Dorsolateral prefrontal cortex (tissue), 120 donors: ENCODE measurements at regions of chr1 and their contacts with region 1.

Region 1: DNA sequence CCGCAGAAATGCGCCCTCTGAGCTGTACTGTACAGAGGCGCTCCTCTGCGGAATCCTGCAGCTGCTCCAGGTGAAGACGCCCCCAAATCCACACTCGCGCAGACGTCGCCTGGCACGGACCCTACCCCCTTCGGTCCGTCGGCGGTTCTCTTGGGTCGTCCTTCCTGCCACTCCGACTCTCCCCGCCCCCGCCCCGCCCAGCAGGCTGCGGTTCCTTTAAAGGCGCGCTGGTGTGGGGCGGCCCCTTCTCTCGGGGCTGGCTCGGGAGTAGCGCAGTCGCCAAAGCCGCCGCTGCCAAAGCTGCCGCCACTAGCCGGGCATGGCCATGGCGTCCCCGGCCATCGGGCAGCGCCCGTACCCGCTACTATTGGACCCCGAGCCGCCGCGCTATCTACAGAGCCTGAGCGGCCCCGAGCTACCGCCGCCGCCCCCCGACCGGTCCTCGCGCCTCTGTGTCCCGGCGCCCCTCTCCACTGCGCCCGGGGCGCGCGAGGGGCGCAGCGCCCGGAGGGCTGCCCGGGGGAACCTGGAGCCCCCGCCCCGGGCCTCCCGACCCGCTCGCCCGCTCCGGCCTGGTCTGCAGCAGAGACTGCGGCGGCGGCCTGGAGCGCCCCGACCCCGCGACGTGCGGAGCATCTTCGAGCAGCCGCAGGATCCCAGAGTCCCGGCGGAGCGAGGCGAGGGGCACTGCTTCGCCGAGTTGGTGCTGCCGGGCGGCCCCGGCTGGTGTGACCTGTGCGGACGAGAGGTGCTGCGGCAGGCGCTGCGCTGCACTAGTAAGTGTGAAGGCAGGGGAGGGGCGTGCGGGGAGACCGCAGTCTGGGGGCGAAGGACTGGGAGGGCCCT is at the start of gene RASSF5:
- DNase-seq: peak; percentile 37 to 88 (median 76)
- H3K4me3 ChIP-seq: peak within 1 kb of the TSS; percentile 35 to 83 (median 68)
- H3K27ac ChIP-seq: peak within 1 kb of the TSS in 34 of 59 donors; percentile 6 to 79 (median 56)
- H3K27me3 ChIP-seq: peaks cover 0 to 33% (median 0%) of the 10 kb centered on the region in 45 donors
- CTCF ChIP-seq: no peak
- total RNA-seq, gene RASSF5: 7.5 to 31.8 (median 17.5) TPM

Region 2: DNA sequence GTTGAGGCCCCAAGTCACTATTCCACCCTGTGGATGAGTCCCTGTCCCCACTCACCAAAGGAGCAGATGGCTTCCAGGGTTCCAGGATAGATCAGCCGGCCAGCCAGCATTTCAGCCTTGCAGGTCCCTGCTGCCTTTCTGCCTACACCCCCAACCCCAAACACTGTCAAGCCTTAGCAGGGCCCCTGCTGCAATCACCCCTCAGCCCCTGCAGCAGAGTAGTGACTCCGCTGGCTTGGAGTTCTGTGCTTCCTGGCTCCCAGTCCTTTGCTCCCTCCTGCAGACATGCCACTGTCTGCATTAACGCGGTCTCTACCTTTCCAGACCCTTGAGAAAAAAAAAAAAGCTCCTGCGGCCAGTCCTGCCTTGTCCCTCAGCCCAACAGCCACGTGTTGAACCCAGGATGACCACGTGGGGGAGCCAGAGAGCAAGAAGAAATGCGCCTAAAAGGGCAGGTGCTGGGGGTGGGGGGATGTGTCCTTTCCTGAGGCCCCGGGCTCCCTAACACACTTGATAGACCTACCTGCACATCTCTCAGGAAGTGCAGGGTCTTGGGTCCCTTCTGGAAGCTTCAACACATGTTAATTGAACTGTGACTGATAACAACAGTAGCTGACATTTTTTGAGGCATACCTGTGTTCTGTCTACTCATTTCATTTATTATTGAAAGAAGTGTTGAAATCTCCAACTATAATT is 37.2 kb after region 1 on chr1:
- intact Hi-C with region 1: loop called in 1 of 2 experiments (anchors 5 kb)
- DNase-seq: peak in 9 of 10 donors; percentile 46 to 77 (median 65)
- H3K4me3 ChIP-seq: no peak overlapping the region
- H3K27ac ChIP-seq: no peak overlapping the region
- H3K27me3 ChIP-seq: no peaks in the 10 kb centered on the region
- CTCF ChIP-seq: peak; percentile 46 to 92 (median 82)

Region 3: DNA sequence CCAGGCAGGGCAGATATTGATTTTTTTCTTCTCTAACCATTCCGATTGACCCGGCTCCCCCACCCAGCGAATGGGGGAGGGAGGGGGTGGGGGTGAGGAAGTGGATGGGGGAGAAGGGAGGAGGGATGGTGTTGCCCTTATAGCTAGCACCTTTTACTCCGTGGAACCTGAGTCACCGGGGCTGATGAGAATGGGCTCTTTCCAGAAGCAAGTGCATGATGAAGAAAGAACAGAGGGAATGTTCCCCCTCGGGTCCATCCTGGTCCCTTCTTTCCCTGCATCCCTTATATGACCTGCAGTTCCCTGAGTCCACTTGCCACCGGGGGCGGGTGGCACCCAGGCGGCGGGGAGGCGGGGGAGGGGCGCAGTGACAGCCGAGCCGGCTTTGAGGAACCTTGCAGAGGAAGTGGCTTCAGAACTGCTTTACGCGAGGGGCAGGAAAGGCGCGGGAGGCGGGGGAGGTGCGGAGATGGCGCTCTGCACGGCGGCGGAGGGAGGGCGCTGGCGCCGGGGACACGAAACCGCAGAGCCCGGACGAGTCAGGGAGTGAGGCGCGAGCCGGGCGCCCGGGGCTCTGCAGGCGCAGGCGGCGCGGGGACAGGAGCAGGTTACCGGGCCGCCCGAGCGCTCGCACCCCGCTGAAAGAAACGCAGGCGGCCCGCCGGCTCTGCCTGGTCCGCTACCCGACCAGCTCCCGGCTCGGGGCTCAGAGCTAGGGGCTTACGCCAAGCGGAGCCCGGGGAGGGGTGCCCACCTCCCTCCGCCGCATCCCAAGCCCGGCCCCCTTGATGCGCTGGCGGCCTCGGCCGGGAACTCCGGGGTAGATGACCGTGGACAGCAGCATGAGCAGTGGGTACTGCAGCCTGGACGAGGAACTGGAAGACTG is 49.5 kb after region 1 on chr1:
- intact Hi-C with region 1: loop called in 1 of 2 experiments (anchors 5 kb)
- DNase-seq: peak; percentile 47 to 85 (median 75)
- H3K4me3 ChIP-seq: peak overlapping the region; percentile 45 to 95 (median 69)
- H3K27ac ChIP-seq: peak overlapping the region in 58 of 59 donors; percentile 13 to 91 (median 77)
- H3K27me3 ChIP-seq: no peaks in the 10 kb centered on the region
- CTCF ChIP-seq: peak in 1 of 56 donors; percentile 10

Region 4: DNA sequence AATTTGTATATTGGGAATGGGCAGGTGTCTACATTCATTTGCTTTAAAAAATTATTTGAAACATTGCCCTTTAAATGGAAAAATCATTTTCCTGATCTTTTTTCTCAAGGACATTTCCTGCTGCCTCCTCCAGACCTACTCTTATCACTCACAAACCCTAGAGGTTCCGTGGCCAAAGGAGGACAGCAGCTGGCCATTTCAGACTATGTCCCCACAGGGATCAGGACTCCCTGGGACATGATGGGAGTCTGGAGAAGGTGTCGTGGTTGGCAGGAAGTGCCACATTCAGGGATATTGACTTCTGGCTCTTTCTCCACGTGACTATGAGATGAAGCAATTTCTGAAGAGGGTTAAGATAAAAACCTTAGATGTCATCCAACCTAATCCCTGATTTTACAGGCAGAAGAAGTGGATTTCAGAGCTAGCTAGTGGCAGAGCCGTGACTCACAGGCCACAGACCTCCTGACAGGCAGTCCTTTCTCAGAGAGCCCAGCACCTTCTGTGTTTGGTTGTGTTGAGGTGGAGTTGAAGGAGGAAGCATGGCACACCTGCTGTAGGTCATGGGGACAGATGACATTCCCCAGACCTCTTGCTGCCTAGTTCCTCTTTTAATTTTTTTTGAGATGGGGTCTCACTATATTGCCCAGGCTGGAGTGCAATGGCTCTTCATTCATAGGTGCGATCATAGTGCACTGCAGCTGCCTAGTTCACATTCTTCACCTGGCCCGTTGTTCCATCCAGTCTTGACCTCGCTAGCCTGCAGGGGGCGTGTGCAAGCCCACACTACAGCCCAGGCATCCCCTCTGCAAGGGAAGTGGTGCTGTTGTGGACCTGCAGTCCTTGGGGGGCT is 290.3 kb after region 1 on chr1:
- intact Hi-C with region 1: no loop called
- DNase-seq: no peak
- H3K4me3 ChIP-seq: no peak overlapping the region
- H3K27ac ChIP-seq: no peak overlapping the region
- H3K27me3 ChIP-seq: peaks cover 0 to 8% (median 0%) of the 10 kb centered on the region in 45 donors
- CTCF ChIP-seq: peak in 18 of 56 donors; percentile 7 to 25 (median 14)

Region 5: DNA sequence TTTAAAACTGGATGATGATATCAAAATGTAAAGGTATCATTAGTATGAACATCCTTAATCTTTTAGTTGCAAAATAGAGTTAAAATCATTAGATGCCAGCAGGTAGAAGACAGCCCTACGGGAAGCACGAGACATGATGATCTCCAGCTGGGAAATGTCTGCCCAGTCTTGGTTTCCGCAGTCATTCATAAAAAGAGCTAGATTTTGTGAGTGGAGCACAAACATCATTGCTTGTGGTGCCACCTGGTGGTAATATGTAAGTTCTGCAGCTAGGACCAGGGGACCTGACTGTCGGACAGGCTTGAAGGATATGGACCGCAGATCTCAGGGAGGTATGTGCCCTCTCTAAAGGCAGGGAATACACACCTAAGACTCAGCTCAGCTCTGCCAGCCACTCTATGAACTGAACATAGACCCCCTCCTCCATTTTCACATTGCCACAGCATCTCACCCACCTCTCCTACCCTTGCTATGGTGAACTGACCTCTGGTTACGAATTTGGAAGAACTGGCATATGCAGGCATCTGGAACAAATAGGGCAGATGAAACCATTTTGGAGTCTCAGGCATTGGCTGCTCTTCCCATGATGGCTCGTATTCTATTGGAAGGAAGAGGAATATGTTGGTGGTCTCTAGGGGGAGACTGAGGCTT is 405.1 kb after region 1 on chr1:
- intact Hi-C with region 1: no loop called
- DNase-seq: peak; percentile 40 to 83 (median 70)
- H3K4me3 ChIP-seq: no peak overlapping the region
- H3K27ac ChIP-seq: no peak overlapping the region
- H3K27me3 ChIP-seq: peaks cover 0 to 40% (median 22%) of the 10 kb centered on the region in 45 donors
- CTCF ChIP-seq: peak; percentile 70 to 98 (median 93)